ENCODE measurements at regions of chr1 and their contacts with region 1.

Region 1: DNA sequence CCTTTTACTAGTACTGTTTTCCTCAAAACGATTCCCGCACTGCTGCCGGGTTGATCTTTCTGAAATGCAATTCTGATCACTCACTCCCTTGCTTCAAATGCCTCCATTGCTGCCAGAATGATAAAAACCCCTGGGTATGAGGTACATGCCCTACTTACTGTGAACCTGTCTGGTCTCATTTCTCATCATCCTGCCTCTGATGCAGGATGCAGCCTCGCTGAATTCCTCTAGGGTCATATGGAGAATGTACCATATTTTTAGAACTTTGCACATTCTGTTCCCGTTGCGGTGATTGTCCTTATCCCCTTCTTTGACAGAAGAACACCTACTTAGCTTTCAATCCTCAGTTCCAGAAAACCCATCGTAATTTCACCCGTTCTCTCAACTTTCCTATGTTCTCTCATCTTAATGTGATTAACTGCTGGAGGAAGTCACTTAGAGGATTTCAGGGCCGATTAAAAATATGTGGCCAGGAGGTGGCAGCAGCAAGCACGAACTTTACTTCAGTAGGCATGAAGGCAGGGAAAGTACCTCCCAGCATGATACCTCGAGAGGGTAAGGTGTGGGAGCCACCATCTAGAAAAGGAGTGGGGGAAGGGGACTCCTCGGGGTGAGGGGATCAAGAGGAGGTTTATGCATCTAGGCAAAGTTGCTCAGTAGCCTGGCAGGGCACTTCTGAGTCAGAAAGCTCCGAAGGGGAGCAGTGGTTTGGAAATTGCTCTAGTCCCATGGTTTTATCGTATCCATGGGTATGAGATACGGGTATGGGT is 361.5 kb upstream of the ZP4 start:
- ATAC-seq: peak in 7 of 8 experiments; percentile 31 to 87 (median 65)
- H3K4me3 ChIP-seq: no peak overlapping the region
- H3K27ac ChIP-seq: no peak overlapping the region
- H3K4me1 ChIP-seq: peaks cover 0 to 25% of the 10 kb centered on the region in 2 donors

Region 2: GRCh38 chr1:237748171-237748960 is 503.9 kb before region 1 on chr1:
- in situ Hi-C with region 1: no loop called
- ATAC-seq: peak in 6 of 8 experiments; percentile 46 to 94 (median 60)
- H3K4me3 ChIP-seq: no peak overlapping the region
- H3K27ac ChIP-seq: no peak overlapping the region
- H3K4me1 ChIP-seq: peaks cover 4 to 5% of the 10 kb centered on the region in 2 donors

Region 3: GRCh38 chr1:238777551-238777950 is 525.3 kb after region 1 on chr1:
- in situ Hi-C with region 1: no loop called
- ATAC-seq: peak in 2 of 8 experiments; percentile 41 to 49
- H3K4me3 ChIP-seq: no peak overlapping the region
- H3K27ac ChIP-seq: no peak overlapping the region
- H3K4me1 ChIP-seq: no peaks in the 10 kb centered on the region

Region 4: DNA sequence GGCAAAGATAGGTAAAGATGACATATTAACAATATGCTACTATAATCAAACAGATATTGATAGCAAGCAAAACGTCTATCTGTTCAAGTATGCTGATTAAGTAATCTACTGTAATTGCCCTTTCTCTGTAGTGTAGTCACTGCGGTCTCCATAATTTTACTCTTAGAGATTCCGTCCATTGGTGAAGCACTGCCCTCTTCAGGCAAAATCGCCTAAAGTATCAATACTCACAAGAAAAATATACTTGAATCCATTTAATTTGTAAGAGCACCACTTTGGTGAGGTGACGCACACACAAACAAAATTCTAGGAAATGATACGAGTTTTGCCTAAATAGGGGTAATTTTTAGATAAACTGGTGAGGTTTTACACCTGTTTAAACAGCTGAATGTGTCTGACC is 699.6 kb after region 1 on chr1:
- in situ Hi-C with region 1: loop called in 1 of 9 experiments (anchors 25 kb)
- ATAC-seq: peak in 3 of 8 experiments; percentile 52 to 76 (median 54)
- H3K4me3 ChIP-seq: no peak overlapping the region
- H3K27ac ChIP-seq: no peak overlapping the region
- H3K4me1 ChIP-seq: peaks cover 5 to 6% of the 10 kb centered on the region in 2 donors

Region 5: GRCh38 chr1:238991765-238992495 is 739.7 kb after region 1 on chr1:
- in situ Hi-C with region 1: no loop called
- ATAC-seq: no peak
- H3K4me3 ChIP-seq: no peak overlapping the region
- H3K27ac ChIP-seq: no peak overlapping the region
- H3K4me1 ChIP-seq: no peaks in the 10 kb centered on the region

Measured in motor neuron (in vitro differentiated cells).